Naive thymus-derived CD4-positive, alpha-beta T cell (primary cell): ENCODE measurements at regions of chr22 and their contacts with region 1.

Region 1: DNA sequence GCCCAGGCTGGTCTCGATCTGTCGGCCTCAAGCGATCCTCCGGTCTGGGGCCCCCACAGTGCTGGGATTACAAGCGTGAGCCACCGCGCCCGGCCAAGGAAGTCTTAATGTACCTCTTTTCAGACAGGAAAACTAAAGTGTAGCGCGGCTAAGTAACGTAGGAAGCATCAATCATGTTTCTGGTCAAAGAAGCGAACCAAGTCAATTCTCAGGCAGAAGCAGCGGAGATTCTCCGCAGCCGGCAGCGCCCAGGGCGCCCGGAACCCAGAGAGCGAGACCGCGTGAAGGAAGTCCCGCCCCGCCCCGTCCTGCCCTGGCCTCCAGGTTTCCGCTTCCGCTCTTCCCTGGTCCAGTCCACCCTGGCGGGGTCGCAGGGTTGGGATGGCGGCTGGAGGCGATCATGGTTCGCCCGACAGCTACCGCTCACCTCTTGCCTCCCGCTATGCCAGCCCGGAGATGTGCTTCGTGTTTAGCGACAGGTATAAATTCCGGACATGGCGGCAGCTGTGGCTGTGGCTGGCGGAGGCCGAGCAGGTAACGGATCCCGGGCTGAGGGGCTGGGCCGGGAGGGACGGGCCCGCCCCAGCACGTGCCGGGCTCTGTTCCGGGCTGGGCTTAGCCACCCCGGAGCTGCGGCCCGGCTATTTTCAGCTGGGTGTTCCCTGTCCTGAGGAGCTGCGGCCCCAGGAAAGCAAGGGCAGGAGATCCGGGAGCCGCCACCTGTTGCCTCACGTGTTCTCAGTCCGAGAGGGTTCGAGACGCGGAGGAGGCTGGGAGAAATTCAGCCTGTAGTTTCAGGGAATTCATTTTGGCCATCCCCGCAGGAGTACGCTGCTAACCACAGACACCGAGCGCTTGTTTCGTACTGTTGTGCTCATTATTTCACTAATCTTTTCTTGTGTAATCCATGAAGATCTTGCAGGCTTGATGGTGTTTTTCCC is at the start of gene ADSL:
- DNase-seq: peak; percentile 70 to 88 (median 81)
- ATAC-seq: peak; percentile 92
- H3K4me3 ChIP-seq: peak within 1 kb of the TSS; percentile 98
- H3K4me3 Mint-ChIP-seq: peak within 1 kb of the TSS; percentile 93 to 99 (median 98)
- H3K27ac ChIP-seq: peak within 1 kb of the TSS; percentile 83
- H3K27ac Mint-ChIP-seq: peak within 1 kb of the TSS; percentile 92 to 99 (median 98)
- H3K4me1 ChIP-seq: peaks cover 37 to 53% of the 10 kb centered on the region in 2 donors
- H3K4me1 Mint-ChIP-seq: peaks cover 36 to 69% (median 49%) of the 10 kb centered on the region in 7 donors
- H3K27me3 ChIP-seq: no peaks in the 10 kb centered on the region
- H3K27me3 Mint-ChIP-seq: no peaks in the 10 kb centered on the region
- total RNA-seq, gene ADSL: 54.4 to 127 (median 61.9) TPM

Region 2: GRCh38 chr22:39598017-39598965 is 748.2 kb before region 1 on chr22:
- CTCF ChIA-PET with region 1: no interaction called
- POLR2A ChIA-PET with region 1: no interaction called
- intact Hi-C with region 1: no loop called
- DNase-seq: peak; percentile 33 to 74 (median 69)
- ATAC-seq: peak; percentile 91
- H3K4me3 ChIP-seq: no peak overlapping the region
- H3K4me3 Mint-ChIP-seq: peak overlapping the region; percentile 27 to 84 (median 52)
- H3K27ac ChIP-seq: no peak overlapping the region
- H3K27ac Mint-ChIP-seq: peak overlapping the region in 2 of 9 donors; percentile 7 to 32
- H3K4me1 ChIP-seq: peaks cover 3 to 25% of the 10 kb centered on the region in 2 donors
- H3K4me1 Mint-ChIP-seq: peaks cover 21 to 51% (median 44%) of the 10 kb centered on the region in 7 donors
- H3K27me3 ChIP-seq: no peaks in the 10 kb centered on the region
- H3K27me3 Mint-ChIP-seq: peaks cover 0 to 32% (median 0%) of the 10 kb centered on the region in 5 donors

Region 3: GRCh38 chr22:39954584-39955055 is 391.8 kb before region 1 on chr22:
- CTCF ChIA-PET with region 1: no interaction called
- POLR2A ChIA-PET with region 1: no interaction called
- intact Hi-C with region 1: loop called in 1 of 2 experiments (anchors 5 kb)
- DNase-seq: no peak
- ATAC-seq: no peak
- H3K4me3 ChIP-seq: no peak overlapping the region
- H3K4me3 Mint-ChIP-seq: peak overlapping the region in 5 of 10 donors; percentile 19 to 80 (median 38)
- H3K27ac ChIP-seq: peak overlapping the region; percentile 69
- H3K27ac Mint-ChIP-seq: peak overlapping the region in 5 of 9 donors; percentile 85 to 98 (median 94)
- H3K4me1 ChIP-seq: peaks cover 61 to 86% of the 10 kb centered on the region in 2 donors
- H3K4me1 Mint-ChIP-seq: peaks cover 69 to 97% (median 89%) of the 10 kb centered on the region in 7 donors
- H3K27me3 ChIP-seq: no peaks in the 10 kb centered on the region
- H3K27me3 Mint-ChIP-seq: no peaks in the 10 kb centered on the region

Region 4: GRCh38 chr22:40116496-40117200 is 229.8 kb before region 1 on chr22:
- CTCF ChIA-PET with region 1: no interaction called
- POLR2A ChIA-PET with region 1: interaction called, 3 read pairs
- intact Hi-C with region 1: loop called in 1 of 2 experiments (anchors 1 kb)
- DNase-seq: peak in 8 of 9 donors; percentile 26 to 88 (median 84)
- ATAC-seq: peak; percentile 95
- H3K4me3 ChIP-seq: peak overlapping the region; percentile 6
- H3K4me3 Mint-ChIP-seq: peak overlapping the region; percentile 26 to 89 (median 78)
- H3K27ac ChIP-seq: peak overlapping the region; percentile 48
- H3K27ac Mint-ChIP-seq: peak overlapping the region; percentile 79 to 94 (median 87)
- H3K4me1 ChIP-seq: peaks cover 24 to 64% of the 10 kb centered on the region in 2 donors
- H3K4me1 Mint-ChIP-seq: peaks cover 31 to 95% (median 92%) of the 10 kb centered on the region in 7 donors
- H3K27me3 ChIP-seq: no peaks in the 10 kb centered on the region
- H3K27me3 Mint-ChIP-seq: no peaks in the 10 kb centered on the region

Region 5: GRCh38 chr22:40215266-40215665 is 131.2 kb before region 1 on chr22:
- CTCF ChIA-PET with region 1: interaction called, 5 read pairs
- POLR2A ChIA-PET with region 1: interaction called, 3 read pairs
- intact Hi-C with region 1: loop called in 1 of 2 experiments (anchors 5 kb)
- DNase-seq: no peak
- ATAC-seq: peak; percentile 36
- H3K4me3 ChIP-seq: peak overlapping the region; percentile 28
- H3K4me3 Mint-ChIP-seq: peak overlapping the region; percentile 38 to 86 (median 70)
- H3K27ac ChIP-seq: peak overlapping the region; percentile 34
- H3K27ac Mint-ChIP-seq: peak overlapping the region; percentile 36 to 97 (median 90)
- H3K4me1 ChIP-seq: peaks cover 51 to 84% of the 10 kb centered on the region in 2 donors
- H3K4me1 Mint-ChIP-seq: peaks cover 82 to 95% (median 92%) of the 10 kb centered on the region in 7 donors
- H3K27me3 ChIP-seq: no peaks in the 10 kb centered on the region
- H3K27me3 Mint-ChIP-seq: no peaks in the 10 kb centered on the region

Region 6: GRCh38 chr22:40289991-40290459 is 56.4 kb before region 1 on chr22:
- CTCF ChIA-PET with region 1: interaction called, 16 read pairs
- POLR2A ChIA-PET with region 1: interaction called, 9 read pairs
- intact Hi-C with region 1: loop called (anchors 1 kb)
- DNase-seq: peak; percentile 45 to 83 (median 75)
- ATAC-seq: peak; percentile 94
- H3K4me3 ChIP-seq: peak overlapping the region; percentile 15
- H3K4me3 Mint-ChIP-seq: peak overlapping the region; percentile 53 to 86 (median 78)
- H3K27ac ChIP-seq: peak overlapping the region; percentile 87
- H3K27ac Mint-ChIP-seq: peak overlapping the region; percentile 93 to 99 (median 96)
- H3K4me1 ChIP-seq: peaks cover 22 to 41% of the 10 kb centered on the region in 2 donors
- H3K4me1 Mint-ChIP-seq: peaks cover 25 to 80% (median 70%) of the 10 kb centered on the region in 7 donors
- H3K27me3 ChIP-seq: no peaks in the 10 kb centered on the region
- H3K27me3 Mint-ChIP-seq: no peaks in the 10 kb centered on the region

Region 7: DNA sequence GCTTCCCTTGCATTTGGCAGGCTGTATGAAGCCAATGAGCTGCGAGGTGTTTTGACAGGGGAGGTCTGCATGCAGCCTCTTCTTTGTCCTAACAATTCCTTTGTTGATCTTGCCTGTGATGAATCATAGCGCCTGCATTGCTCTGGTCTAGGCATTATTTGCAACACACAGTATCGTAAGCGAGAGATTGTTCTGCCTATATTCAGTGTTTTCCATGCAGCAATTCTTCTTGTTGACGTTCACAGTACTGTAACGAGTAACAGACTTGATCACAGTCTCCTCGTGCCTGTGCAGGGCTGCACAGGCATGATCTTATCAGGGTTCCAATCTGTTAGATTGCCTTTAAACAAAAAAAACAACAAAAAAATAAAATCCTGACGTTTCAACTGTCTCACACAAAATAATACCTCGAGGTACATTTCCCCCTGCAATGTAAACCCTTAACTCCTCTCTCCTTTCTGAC is 14.1 kb before region 1 on chr22:
- CTCF ChIA-PET with region 1: interaction called, 6 read pairs
- POLR2A ChIA-PET with region 1: interaction called, 77 read pairs
- intact Hi-C with region 1: loop called in 1 of 2 experiments (anchors 1 kb)
- DNase-seq: peak in 7 of 9 donors; percentile 42 to 72 (median 65)
- ATAC-seq: peak; percentile 61
- H3K4me3 ChIP-seq: peak overlapping the region; percentile 26
- H3K4me3 Mint-ChIP-seq: peak overlapping the region; percentile 59 to 84 (median 68)
- H3K27ac ChIP-seq: peak overlapping the region; percentile 65
- H3K27ac Mint-ChIP-seq: peak overlapping the region; percentile 72 to 99 (median 95)
- H3K4me1 ChIP-seq: peaks cover 65 to 87% of the 10 kb centered on the region in 2 donors
- H3K4me1 Mint-ChIP-seq: peaks cover 65 to 99% (median 93%) of the 10 kb centered on the region in 7 donors
- H3K27me3 ChIP-seq: no peaks in the 10 kb centered on the region
- H3K27me3 Mint-ChIP-seq: no peaks in the 10 kb centered on the region